H1 (cell line): ENCODE measurements at regions of chr15 and their contacts with region 1.

Region 1: DNA sequence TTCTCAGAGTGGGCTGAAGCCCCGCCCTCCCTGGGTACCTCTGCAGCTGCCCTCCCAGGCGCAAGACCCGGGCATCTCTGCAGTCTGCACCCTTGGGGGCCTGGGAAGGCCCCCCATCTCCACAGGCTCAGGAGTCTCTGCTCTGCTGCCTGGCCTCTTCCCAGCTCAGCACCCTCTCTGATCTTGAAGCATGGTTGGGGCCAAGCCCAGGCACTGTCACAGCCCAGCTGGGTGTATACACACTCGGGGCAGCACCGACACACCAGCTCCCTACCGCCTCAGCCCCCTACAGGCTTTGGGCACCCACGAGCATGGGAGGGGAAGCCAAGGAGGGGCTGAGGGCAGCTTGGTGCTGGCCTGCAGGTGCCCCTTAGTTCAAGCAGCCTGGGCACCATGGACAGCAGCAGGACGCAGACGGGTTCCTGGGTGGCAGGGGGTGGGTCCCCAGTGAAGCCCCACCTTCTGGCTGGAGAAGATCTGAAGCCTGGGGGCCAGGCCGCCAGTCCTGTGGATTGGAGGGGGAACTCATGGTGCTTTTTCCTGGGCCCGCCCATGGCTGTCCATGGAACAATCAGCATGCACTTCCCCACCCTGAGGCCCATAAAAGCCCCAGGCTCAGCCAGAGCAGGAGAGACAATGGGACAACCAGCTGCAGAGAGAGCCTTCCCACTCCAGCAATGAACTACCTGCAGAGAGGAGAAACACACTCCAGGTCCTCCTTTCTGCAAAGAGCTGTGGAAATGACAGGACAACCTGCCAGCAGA is 170.6 kb downstream of the TJP1 start:
- DNase-seq: no peak
- H3K4me3 ChIP-seq: no peak overlapping the region
- H3K27ac ChIP-seq: no peak overlapping the region
- H3K4me1 ChIP-seq: peaks cover 0 to 2% (median 0%) of the 10 kb centered on the region in 4 experiments; a peak in 3 of 7 replicates
- H3K27me3 ChIP-seq: no peaks in the 10 kb centered on the region
- CTCF ChIP-seq: no peak
- EP300 ChIP-seq: no peak
- POLR2A ChIP-seq: no peak
- RAD21 ChIP-seq: no peak

Region 2: DNA sequence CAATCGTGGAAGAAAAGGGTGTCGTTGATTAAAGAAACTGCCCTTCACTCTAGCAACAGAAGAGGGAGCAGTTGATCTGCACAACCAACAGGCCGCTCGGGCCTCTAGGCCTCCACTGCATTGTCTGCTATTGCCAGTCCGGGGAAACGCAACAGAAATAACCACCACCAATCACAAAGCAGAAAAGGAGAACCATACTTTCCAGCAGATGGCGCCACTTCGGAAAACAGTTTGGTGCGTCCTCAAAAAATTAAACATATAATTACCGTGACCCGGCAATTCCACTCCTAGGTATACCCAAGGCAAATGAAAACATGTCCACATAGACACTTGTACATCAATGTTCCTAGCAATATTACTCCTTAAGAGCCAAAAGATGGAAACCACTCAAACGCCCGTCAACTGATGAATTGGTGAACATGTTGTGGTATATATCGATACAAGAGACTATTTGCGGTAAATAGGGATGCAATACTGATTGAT is 16.5 kb after region 1 on chr15:
- CTCF ChIA-PET with region 1: interaction called, 10 read pairs
- POLR2A ChIA-PET with region 1: no interaction called
- DNase-seq: peak; percentile 79 to 83
- H3K4me3 ChIP-seq: no peak overlapping the region
- H3K27ac ChIP-seq: no peak overlapping the region
- H3K4me1 ChIP-seq: peaks cover 0 to 6% (median 1%) of the 10 kb centered on the region in 4 experiments; a peak in 3 of 7 replicates
- H3K27me3 ChIP-seq: no peaks in the 10 kb centered on the region; a peak in 1 of 7 replicates
- CTCF ChIP-seq: peak; percentile 56 to 97 (median 89)
- EP300 ChIP-seq: no peak
- POLR2A ChIP-seq: no peak
- RAD21 ChIP-seq: peak; percentile 92 to 95

Region 3: DNA sequence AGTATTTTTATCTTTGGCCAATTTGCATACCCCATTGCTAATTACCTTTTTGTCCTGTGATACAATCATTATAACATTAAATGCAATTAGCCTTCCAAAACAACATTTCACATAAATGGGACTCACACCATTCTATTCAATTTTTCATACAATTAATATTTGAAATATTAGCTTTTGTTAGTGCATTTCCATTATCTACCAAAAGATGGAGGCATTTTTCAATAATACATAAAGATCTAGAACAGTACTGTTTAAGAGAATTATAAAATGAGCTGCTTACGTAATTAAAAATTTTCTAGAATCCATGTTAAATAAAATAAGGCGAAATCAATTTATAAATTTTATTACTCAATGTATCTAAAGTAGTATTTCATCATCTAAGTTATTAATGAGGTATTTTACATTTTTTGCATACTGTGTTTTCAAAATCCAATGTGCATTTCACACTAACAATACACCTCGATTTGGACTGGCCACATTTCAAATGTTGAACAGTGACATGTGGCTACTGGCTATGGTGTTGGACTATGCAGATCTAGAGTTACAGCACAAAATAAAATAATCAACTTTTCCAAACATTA is 96.3 kb after region 1 on chr15:
- CTCF ChIA-PET with region 1: no interaction called
- POLR2A ChIA-PET with region 1: no interaction called
- DNase-seq: no peak
- H3K4me3 ChIP-seq: no peak overlapping the region
- H3K27ac ChIP-seq: no peak overlapping the region
- H3K4me1 ChIP-seq: no peaks in the 10 kb centered on the region
- H3K27me3 ChIP-seq: no peaks in the 10 kb centered on the region
- CTCF ChIP-seq: no peak
- EP300 ChIP-seq: no peak
- POLR2A ChIP-seq: no peak
- RAD21 ChIP-seq: no peak